Activated CD4-positive, alpha-beta T cell treated with anti-CD3 and anti-CD28 coated beads for 36 hours (primary cell): ENCODE measurements at regions of chr4 and their contacts with region 1.

Region 1: DNA sequence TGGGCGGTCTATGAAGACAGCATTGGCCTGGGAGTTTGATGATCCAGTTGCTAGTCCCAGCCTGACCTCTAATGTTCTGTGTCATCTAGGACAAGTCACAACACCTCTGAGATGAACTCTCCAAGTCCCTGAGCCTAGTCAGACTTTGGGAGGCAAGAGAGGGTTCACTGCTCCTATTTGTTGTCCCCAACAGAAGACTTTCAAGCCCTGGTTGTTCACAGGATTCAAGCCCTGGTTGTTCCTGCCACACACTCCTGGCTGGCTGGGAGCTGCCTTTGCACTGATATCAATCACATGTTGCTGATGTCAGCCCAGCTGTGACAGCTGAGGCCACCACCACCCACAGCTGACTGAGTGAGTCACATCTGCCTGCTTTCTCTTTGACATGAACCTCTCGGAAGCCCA is 253.2 kb upstream of the RASGEF1B start:
- DNase-seq: peak; percentile 85
- ATAC-seq: peak; percentile 100
- H3K4me3 Mint-ChIP-seq: no peak overlapping the region
- H3K27ac Mint-ChIP-seq: no peak overlapping the region
- H3K4me1 Mint-ChIP-seq: peaks cover 17% of the 10 kb centered on the region
- H3K27me3 Mint-ChIP-seq: peaks cover 3% of the 10 kb centered on the region

Region 2: GRCh38 chr4:81214881-81215868 is 509.8 kb before region 1 on chr4 and contains the start of gene PRKG2:
- CTCF ChIA-PET with region 1: no interaction called
- POLR2A ChIA-PET with region 1: no interaction called
- intact Hi-C with region 1: no loop called
- DNase-seq: peak; percentile 7
- ATAC-seq: peak; percentile 55
- H3K4me3 Mint-ChIP-seq: peak within 1 kb of the TSS; percentile 36
- H3K27ac Mint-ChIP-seq: no peak within 1 kb of the TSS
- H3K4me1 Mint-ChIP-seq: peaks cover 13% of the 10 kb centered on the region
- H3K27me3 Mint-ChIP-seq: peaks cover 37% of the 10 kb centered on the region
- total RNA-seq, gene PRKG2: 0.05 to 0.14 TPM

Region 3: DNA sequence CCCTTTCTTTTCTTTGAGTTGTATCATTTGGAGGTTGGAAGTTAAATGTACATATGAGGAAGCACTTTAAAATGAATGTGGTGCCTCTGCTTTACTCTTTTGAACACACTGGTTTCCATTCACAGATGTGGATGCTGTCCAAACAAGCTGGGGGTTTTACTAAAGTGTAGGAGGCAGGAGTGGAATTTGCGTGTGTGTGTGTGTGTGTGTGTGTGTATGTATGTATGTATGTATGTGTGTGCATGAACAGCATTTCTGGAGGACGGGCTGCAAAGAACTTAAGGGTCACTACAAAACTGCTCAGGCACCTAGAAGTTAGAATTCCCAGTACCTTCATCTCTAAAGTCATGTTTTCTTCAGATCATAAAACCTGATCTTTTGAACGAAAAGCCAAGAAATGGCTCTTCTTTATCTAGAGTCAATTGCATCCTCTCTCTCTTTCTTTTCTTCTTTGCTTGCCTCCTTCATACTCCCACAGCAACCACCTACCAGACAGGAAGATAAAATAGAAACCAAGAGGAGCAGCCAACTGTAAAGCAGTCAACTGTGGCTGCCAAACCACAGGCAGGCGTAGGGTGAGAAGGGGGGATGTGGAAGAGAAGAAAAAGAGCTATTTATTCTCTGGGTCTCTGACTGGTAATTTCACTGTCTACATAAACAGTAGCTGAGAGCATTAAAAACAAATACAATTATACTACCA is 76.2 kb before region 1 on chr4:
- CTCF ChIA-PET with region 1: no interaction called
- POLR2A ChIA-PET with region 1: interaction called, 4 read pairs
- intact Hi-C with region 1: loop called in 1 of 2 experiments (anchors 5 kb)
- DNase-seq: peak; percentile 65
- ATAC-seq: peak; percentile 46
- H3K4me3 Mint-ChIP-seq: peak overlapping the region; percentile 26
- H3K27ac Mint-ChIP-seq: peak overlapping the region; percentile 26
- H3K4me1 Mint-ChIP-seq: peaks cover 60% of the 10 kb centered on the region
- H3K27me3 Mint-ChIP-seq: no peaks in the 10 kb centered on the region

Region 4: DNA sequence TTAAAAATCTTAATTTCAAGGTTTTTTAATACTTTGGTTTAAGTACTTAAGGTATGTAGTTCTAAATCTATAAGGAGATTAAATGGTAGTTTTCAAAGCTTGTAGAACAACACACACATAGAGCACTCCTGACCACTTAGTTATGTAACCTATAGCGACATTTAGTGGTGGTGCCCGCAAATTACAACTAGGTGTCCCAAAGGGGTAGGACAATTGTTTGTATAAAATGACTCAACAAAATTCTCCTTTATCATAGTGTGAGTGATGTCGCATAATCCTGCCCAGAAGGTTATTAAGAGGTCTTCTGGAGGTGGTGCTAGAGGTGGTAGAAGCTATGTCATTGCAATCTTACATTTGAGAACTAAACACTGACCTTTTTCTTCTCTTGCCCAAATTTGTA is 119.8 kb after region 1 on chr4:
- CTCF ChIA-PET with region 1: interaction called, 3 read pairs
- POLR2A ChIA-PET with region 1: no interaction called
- intact Hi-C with region 1: loop called in 1 of 2 experiments (anchors 5 kb)
- DNase-seq: peak; percentile 77
- ATAC-seq: peak; percentile 92
- H3K4me3 Mint-ChIP-seq: no peak overlapping the region
- H3K27ac Mint-ChIP-seq: no peak overlapping the region
- H3K4me1 Mint-ChIP-seq: peaks cover 7% of the 10 kb centered on the region
- H3K27me3 Mint-ChIP-seq: no peaks in the 10 kb centered on the region

Region 5: DNA sequence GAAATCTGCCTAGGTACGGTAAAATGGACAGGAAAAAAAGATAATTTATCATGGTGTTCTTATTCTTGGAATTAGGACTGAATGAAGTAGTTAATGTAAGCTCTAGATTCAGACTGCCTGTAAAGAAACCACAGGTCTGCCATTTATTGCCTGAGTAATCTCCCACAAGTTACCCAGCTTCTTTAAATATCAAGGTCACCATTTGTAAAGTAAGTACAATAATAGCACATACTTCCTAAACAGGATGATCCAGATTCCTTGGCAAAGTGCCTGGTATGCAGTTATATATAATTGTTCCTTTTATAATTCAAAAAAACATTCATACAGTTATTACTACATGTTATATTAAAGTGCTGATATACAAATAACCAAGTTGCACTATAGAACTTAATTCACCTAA is 280.2 kb after region 1 on chr4:
- CTCF ChIA-PET with region 1: no interaction called
- POLR2A ChIA-PET with region 1: no interaction called
- intact Hi-C with region 1: no loop called
- DNase-seq: no peak
- ATAC-seq: no peak
- H3K4me3 Mint-ChIP-seq: no peak overlapping the region
- H3K27ac Mint-ChIP-seq: no peak overlapping the region
- H3K4me1 Mint-ChIP-seq: no peaks in the 10 kb centered on the region
- H3K27me3 Mint-ChIP-seq: peaks cover 10% of the 10 kb centered on the region